ENCODE measurements at regions of chr9 and their contacts with region 1.

Region 1: DNA sequence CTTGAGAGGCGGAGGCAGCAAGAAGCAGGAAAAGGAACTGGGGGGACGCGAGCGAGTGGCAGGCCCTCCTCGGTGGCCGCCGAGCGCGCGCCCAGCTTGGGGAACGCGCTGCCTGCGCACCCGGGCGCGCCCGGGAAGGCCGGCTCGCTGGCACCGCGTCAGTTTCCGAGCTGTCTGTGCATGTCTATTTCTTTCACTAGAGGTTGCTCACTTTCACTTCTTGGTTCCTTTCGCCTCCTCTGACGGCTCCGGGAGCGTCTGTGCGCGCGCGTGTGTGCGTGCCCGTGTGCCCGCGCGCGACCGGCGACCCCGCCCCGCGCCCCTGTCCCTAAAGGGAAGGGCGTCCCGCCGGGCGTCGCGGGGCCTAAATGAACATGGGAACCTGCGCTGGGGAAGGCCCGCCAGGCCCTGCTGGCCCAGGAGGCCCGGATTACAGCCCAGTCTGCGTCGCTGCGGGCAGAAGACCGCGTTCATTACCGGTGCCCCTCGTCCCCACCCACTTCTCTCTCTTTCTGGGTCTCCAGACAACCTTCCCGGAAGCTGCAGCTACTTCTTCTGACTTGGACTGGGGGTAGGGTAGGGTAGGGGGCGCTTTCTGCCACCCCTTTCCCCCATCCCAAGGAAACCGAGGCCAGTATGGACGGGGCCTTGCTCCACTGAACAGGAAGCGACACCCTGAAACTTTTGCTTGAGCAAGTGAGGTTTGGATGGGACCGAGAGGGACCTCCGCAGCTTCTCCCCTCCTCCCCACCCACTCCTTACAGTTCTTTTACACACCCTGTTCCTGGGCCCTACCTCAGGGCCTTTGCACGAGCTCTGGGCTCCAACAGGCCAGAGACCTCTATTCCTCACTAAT is 205.7 kb upstream of the IER5L start:
- DNase-seq: peak; percentile 74 to 84 (median 77)
- H3K4me3 ChIP-seq: peak overlapping the region; percentile 14 to 56
- H3K4me3 Mint-ChIP-seq: peak overlapping the region; percentile 76 to 83 (median 78)
- H3K27ac ChIP-seq: peak overlapping the region; percentile 42
- H3K27ac Mint-ChIP-seq: peak overlapping the region; percentile 10 to 95 (median 90)
- H3K4me1 ChIP-seq: peaks cover 11% of the 10 kb centered on the region
- H3K4me1 Mint-ChIP-seq: peaks cover 0 to 13% (median 4%) of the 10 kb centered on the region in 4 donors
- H3K27me3 ChIP-seq: no peaks in the 10 kb centered on the region
- H3K27me3 Mint-ChIP-seq: no peaks in the 10 kb centered on the region

Region 2: GRCh38 chr9:129362287-129363000 is 21.3 kb before region 1 on chr9:
- CTCF ChIA-PET with region 1: no interaction called
- POLR2A ChIA-PET with region 1: no interaction called
- intact Hi-C with region 1: no loop called
- DNase-seq: no peak
- H3K4me3 ChIP-seq: no peak overlapping the region
- H3K4me3 Mint-ChIP-seq: no peak overlapping the region
- H3K27ac ChIP-seq: no peak overlapping the region
- H3K27ac Mint-ChIP-seq: no peak overlapping the region
- H3K4me1 ChIP-seq: no peaks in the 10 kb centered on the region
- H3K4me1 Mint-ChIP-seq: no peaks in the 10 kb centered on the region
- H3K27me3 ChIP-seq: no peaks in the 10 kb centered on the region
- H3K27me3 Mint-ChIP-seq: peaks cover 2 to 4% of the 10 kb centered on the region in 2 donors

Region 3: DNA sequence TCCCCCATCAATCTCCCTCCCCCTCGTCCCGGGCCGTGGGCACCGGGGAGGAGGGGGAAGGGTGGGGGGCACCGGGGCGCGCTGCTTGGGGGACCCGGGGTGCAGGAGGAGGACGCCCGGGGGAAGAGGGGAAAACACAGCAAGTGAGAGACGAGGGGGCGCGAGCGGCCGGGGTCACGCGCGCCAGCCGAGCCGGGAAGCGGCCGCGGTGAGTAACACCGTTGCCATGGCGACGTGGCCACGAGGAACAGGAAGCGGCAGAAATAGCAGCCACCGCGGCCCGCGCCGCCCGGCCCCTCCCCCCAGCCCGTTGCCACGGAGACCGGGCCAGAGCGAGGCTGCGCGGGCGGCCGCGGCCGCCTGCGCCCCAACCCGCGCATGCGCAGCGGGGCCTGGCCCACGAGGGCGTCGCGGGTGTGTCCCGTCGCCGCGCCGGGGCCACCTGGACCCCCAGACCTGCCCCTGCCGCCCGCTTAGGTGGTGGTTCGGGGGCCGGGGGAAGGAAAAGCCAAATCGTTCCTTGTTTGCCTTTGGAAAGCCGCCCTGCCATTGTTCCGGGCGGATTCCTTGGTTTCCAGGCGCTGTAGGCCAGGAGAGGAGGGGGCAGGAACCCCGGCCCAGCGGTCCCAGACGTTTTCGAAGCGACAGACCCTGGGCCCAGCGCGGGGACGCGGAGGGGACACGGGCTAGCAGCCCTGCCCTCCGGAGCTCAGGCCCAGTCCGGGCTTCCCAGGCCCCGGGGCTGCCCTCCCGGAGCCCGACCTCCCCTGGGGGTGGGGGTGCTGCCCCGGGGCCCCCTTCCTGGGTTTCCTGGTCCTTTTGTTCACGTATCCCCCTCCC is 30.0 kb after region 1 on chr9:
- CTCF ChIA-PET with region 1: no interaction called
- POLR2A ChIA-PET with region 1: interaction called, 22 read pairs
- intact Hi-C with region 1: loop called (anchors 1 kb)
- DNase-seq: peak; percentile 96 to 99 (median 98)
- H3K4me3 ChIP-seq: peak overlapping the region; percentile 29 to 53
- H3K4me3 Mint-ChIP-seq: peak overlapping the region; percentile 82 to 91 (median 86)
- H3K27ac ChIP-seq: peak overlapping the region; percentile 97
- H3K27ac Mint-ChIP-seq: peak overlapping the region; percentile 96 to 99 (median 98)
- H3K4me1 ChIP-seq: peaks cover 27% of the 10 kb centered on the region
- H3K4me1 Mint-ChIP-seq: peaks cover 16 to 34% (median 24%) of the 10 kb centered on the region in 4 donors
- H3K27me3 ChIP-seq: no peaks in the 10 kb centered on the region
- H3K27me3 Mint-ChIP-seq: no peaks in the 10 kb centered on the region

Region 4: DNA sequence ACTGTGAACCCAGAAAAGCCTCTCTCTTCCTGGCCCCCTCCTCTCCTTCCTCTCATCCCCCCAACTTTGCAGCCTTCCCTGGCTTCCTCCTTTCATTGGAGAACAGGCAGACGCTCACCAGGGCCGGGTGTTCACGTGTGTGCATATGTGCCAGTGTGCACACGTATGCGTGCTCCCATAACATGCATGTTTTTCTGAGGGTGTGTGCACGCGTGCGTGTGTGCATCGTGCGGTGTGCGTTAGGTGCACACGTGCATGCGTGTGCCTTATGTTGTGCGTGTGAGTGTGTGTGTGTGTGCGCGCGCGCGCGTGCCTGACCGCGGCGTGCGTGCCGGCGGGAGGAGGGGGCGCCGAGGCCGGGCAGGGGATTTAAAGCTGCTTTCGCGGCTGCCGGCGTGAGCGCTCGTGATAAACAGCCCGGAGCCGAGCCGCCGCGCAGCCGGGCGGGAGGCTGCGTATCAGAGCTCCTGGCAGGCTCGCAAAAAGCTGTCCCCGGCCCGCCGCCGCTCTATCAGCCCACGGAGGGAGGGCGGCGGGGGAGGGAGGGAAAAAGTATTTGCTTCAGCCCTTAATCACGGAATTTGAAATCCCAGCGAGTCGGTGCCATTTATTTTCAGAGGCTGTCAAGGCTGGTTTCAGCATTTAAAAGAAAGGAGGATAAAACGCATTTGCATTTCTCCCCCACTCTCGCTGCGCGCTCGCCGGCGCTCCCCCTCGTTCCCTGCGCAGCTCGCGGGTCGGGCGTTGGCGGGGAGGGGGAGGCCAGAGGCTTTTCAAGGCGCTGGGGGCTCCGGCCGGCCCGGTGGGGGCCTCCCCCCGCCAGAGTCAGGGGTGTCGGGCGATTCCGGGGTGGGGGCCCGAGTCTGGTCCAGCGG is 53.2 kb after region 1 on chr9:
- CTCF ChIA-PET with region 1: no interaction called
- POLR2A ChIA-PET with region 1: interaction called, 17 read pairs
- intact Hi-C with region 1: no loop called
- DNase-seq: peak in 4 of 5 donors; percentile 45 to 49 (median 48)
- H3K4me3 ChIP-seq: peak overlapping the region in 1 of 2 donors; percentile 45
- H3K4me3 Mint-ChIP-seq: peak overlapping the region; percentile 85 to 96 (median 89)
- H3K27ac ChIP-seq: no peak overlapping the region
- H3K27ac Mint-ChIP-seq: peak overlapping the region in 6 of 7 donors; percentile 5 to 87 (median 82)
- H3K4me1 ChIP-seq: peaks cover 20% of the 10 kb centered on the region
- H3K4me1 Mint-ChIP-seq: peaks cover 12 to 43% (median 22%) of the 10 kb centered on the region in 4 donors
- H3K27me3 ChIP-seq: peaks cover 19% of the 10 kb centered on the region
- H3K27me3 Mint-ChIP-seq: peaks cover 32 to 36% of the 10 kb centered on the region in 2 donors

Region 5: DNA sequence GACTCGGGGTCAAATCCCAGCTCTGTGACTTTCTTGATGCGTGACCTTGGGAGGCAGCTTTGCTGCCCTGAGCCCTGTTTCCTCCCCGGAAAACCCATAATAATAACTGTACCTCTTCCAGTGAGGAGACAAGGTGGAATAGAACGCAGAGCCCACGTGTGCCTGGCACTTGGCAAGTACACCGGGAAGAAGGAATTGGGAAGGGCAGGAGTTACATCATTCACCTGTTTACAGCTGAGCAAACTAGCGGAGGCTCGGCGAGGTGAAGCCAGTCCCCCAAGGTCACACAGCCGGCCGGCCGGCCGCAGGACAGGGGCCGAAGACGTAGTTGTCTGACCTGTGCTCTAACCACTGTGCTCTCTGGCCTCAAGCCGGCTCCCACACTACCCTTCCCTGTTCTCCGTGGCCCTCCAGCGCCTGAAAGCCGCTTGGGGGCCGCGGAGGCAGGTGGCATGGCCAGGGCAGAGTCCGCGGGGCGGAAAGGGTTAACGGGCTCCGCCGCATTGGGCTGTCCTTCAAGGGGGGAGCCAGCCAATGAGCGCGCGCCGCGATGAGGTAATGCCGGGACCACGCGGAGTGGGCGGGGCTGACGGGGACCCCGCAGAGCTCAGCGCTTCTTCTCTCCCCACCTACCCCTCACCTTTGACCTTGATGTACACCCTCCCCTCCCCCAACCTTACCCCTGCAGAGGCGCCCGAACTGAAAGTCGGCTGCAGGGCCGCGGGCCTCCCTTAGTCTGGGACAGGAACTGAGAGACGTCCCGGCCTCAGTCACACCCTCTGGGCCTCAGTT is 111.9 kb after region 1 on chr9:
- CTCF ChIA-PET with region 1: no interaction called
- POLR2A ChIA-PET with region 1: interaction called, 11 read pairs
- intact Hi-C with region 1: loop called (anchors 5 kb)
- DNase-seq: peak; percentile 77 to 84 (median 78)
- H3K4me3 ChIP-seq: peak overlapping the region; percentile 51 to 84
- H3K4me3 Mint-ChIP-seq: peak overlapping the region; percentile 81 to 92 (median 86)
- H3K27ac ChIP-seq: peak overlapping the region; percentile 63
- H3K27ac Mint-ChIP-seq: peak overlapping the region; percentile 75 to 94 (median 91)
- H3K4me1 ChIP-seq: peaks cover 35% of the 10 kb centered on the region
- H3K4me1 Mint-ChIP-seq: peaks cover 18 to 49% (median 32%) of the 10 kb centered on the region in 4 donors
- H3K27me3 ChIP-seq: no peaks in the 10 kb centered on the region
- H3K27me3 Mint-ChIP-seq: no peaks in the 10 kb centered on the region

Region 6: DNA sequence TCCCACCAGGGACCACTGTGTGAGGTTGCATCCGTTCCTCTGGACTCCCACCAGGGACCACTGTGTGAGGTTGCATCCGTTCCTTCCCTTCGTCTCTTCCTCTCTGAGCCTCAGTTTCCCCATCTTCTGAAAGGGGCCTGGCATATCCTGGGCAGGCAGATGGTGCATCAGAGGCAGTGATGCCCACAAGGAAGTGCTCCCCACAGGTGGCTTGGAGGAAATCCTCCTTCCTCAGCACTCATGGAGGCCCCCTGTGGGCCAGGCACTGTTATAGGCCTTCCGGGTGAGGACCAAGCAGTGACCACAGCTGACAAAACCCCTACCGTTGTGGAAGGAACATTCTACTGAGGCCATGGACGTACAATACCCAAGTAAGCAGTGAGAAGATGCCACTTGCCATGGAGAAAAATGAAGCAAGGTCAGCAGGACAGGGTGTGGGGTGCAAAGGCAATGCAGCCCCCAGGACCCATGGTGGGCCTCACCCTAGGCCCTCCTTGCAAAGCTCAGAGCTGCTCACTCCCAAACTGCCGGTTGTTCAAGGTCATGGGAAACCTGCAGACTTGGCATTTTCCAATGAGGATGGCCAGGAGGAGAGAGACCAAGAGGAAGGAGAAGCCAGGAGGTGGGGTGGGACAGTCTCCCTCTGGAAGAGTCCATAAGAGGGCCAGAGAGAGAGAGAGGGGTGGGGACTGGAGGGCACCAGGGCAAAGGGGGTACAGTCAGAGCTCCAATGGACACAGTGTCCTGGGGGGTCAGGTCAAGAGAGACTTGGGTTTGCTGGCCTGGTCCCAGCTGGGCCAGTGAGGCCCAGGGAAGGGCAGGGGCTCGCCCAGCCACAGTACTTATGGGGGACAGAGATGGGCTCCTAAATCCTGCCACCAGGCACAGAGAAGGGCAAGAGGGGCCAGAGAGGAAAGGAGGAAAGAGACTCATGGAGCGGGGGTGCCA is 186.0 kb after region 1 on chr9:
- CTCF ChIA-PET with region 1: interaction called, 4 read pairs
- POLR2A ChIA-PET with region 1: no interaction called
- intact Hi-C with region 1: loop called (anchors 1 kb)
- DNase-seq: no peak
- H3K4me3 ChIP-seq: no peak overlapping the region
- H3K4me3 Mint-ChIP-seq: peak overlapping the region; percentile 3 to 82 (median 76)
- H3K27ac ChIP-seq: no peak overlapping the region
- H3K27ac Mint-ChIP-seq: peak overlapping the region in 2 of 7 donors; percentile 15 to 77
- H3K4me1 ChIP-seq: peaks cover 20% of the 10 kb centered on the region
- H3K4me1 Mint-ChIP-seq: peaks cover 0 to 13% (median 9%) of the 10 kb centered on the region in 4 donors
- H3K27me3 ChIP-seq: peaks cover 15% of the 10 kb centered on the region
- H3K27me3 Mint-ChIP-seq: peaks cover 13 to 14% of the 10 kb centered on the region in 2 donors